CD4-positive, alpha-beta T cell (primary cell): ENCODE measurements at regions of chr17 and their contacts with region 1.

Region 1: GRCh38 chr17:51166197-51166986 is at the start of gene NME2:
- DNase-seq: peak; percentile 24 to 83 (median 50)
- ATAC-seq: peak; percentile 69
- H3K4me3 ChIP-seq: peak within 1 kb of the TSS; percentile 76
- H3K4me3 Mint-ChIP-seq: peak within 1 kb of the TSS; percentile 95
- H3K27ac ChIP-seq: peak within 1 kb of the TSS; percentile 50 to 70
- H3K27ac Mint-ChIP-seq: peak within 1 kb of the TSS; percentile 93
- H3K4me1 ChIP-seq: peaks cover 20% of the 10 kb centered on the region
- H3K4me1 Mint-ChIP-seq: peaks cover 20% of the 10 kb centered on the region
- H3K27me3 ChIP-seq: no peaks in the 10 kb centered on the region
- H3K27me3 Mint-ChIP-seq: no peaks in the 10 kb centered on the region
- CTCF ChIP-seq: no peak
- total RNA-seq, gene NME2: 135 to 138 TPM

Region 2: DNA sequence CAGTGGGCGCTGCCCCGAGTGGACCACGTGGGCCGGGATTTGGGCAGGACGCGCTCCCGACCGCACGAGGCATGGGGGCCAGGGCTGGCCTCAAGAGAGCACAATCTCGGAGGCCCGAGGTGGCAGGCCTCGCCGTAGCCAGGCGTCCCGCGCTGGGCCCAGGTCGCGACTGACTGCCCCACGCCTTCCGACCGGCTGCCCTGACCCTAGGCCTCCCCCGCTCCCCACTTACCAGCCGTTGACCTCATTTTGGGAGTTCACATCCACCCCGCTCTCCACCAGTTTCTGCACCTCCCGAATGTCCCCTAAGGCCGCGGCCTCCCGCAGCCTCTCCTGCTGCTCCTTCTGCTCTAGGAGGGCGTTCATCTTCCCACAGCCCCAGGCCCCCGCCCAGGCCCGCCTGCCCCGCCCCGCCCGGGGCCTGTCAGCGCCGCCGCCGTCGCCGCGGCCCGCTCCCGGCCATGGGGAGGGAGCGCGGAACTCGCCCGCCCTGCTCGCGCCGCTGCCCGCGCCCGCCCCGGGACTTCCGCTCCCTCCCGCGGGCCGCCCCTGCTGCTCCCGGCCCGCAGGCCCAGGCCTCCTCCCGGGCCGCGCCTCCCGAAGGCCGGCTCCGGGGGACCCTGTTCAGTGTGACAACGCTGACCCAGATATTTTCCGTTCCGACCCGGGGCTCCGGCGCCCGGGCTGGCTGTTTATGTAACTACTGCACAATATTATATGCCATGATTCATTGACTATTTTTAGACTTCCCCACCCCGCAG is 458.9 kb before region 1 on chr17 and contains the start of gene ANKRD40:
- CTCF ChIA-PET with region 1: no interaction called
- POLR2A ChIA-PET with region 1: no interaction called
- intact Hi-C with region 1: loop called in 1 of 2 experiments (anchors 5 kb)
- DNase-seq: peak; percentile 82 to 95 (median 89)
- ATAC-seq: peak; percentile 80
- H3K4me3 ChIP-seq: peak within 1 kb of the TSS; percentile 75
- H3K4me3 Mint-ChIP-seq: peak within 1 kb of the TSS; percentile 99
- H3K27ac ChIP-seq: peak within 1 kb of the TSS; percentile 84 to 95
- H3K27ac Mint-ChIP-seq: peak within 1 kb of the TSS; percentile 97
- H3K4me1 ChIP-seq: peaks cover 41% of the 10 kb centered on the region
- H3K4me1 Mint-ChIP-seq: peaks cover 44% of the 10 kb centered on the region
- H3K27me3 ChIP-seq: no peaks in the 10 kb centered on the region
- H3K27me3 Mint-ChIP-seq: no peaks in the 10 kb centered on the region
- CTCF ChIP-seq: no peak
- total RNA-seq, gene ANKRD40: 22.8 to 24.0 TPM

Region 3: DNA sequence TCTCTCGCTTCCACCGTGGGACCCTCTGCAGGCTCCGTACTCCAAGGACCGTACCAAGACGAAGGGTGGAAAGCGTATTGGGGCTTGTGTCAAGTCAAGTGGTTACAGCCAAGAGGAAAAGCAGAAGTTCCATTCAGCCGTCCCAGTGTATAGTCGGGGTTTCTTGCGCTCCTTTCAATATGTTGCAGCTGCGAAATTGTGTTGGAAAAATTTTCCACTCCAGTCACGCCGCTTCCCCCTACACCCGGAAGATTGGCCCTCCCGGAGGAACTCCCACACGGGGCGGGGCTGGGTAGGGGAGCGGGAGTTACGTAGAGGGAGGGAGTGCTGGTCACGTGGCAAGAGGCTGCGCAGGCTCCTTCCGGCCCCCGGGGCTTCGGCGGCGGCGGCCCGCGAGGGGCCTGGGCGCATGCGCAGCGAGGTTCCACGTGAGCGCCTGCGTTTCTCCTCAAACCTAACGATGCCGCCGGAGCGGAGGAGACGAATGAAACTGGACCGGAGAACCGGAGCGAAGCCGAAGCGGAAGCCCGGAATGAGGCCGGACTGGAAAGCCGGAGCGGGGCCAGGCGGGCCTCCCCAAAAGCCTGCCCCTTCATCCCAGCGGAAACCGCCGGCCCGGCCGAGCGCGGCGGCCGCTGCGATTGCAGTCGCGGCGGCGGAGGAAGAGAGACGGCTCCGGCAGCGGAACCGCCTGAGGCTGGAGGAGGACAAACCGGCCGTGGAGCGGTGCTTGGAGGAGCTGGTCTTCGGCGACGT is 93.9 kb after region 1 on chr17 and contains the start of gene UTP18:
- CTCF ChIA-PET with region 1: no interaction called
- POLR2A ChIA-PET with region 1: interaction called, 4 read pairs
- intact Hi-C with region 1: loop called (anchors 5 kb)
- DNase-seq: peak; percentile 89 to 99 (median 96)
- ATAC-seq: peak; percentile 87
- H3K4me3 ChIP-seq: peak within 1 kb of the TSS; percentile 90
- H3K4me3 Mint-ChIP-seq: peak within 1 kb of the TSS; percentile 99
- H3K27ac ChIP-seq: peak within 1 kb of the TSS; percentile 96 to 99
- H3K27ac Mint-ChIP-seq: peak within 1 kb of the TSS; percentile 99
- H3K4me1 ChIP-seq: peaks cover 36% of the 10 kb centered on the region
- H3K4me1 Mint-ChIP-seq: peaks cover 85% of the 10 kb centered on the region
- H3K27me3 ChIP-seq: no peaks in the 10 kb centered on the region
- H3K27me3 Mint-ChIP-seq: no peaks in the 10 kb centered on the region
- CTCF ChIP-seq: no peak
- total RNA-seq, gene UTP18: 48.5 to 49.8 TPM

Region 4: GRCh38 chr17:51516924-51517323 is 350.5 kb after region 1 on chr17:
- CTCF ChIA-PET with region 1: no interaction called
- POLR2A ChIA-PET with region 1: no interaction called
- intact Hi-C with region 1: no loop called
- DNase-seq: no peak
- ATAC-seq: no peak
- H3K4me3 ChIP-seq: no peak overlapping the region
- H3K4me3 Mint-ChIP-seq: no peak overlapping the region
- H3K27ac ChIP-seq: no peak overlapping the region
- H3K27ac Mint-ChIP-seq: no peak overlapping the region
- H3K4me1 ChIP-seq: peaks cover 4% of the 10 kb centered on the region
- H3K4me1 Mint-ChIP-seq: no peaks in the 10 kb centered on the region
- H3K27me3 ChIP-seq: no peaks in the 10 kb centered on the region
- H3K27me3 Mint-ChIP-seq: peaks cover 16% of the 10 kb centered on the region
- CTCF ChIP-seq: no peak